Activated CD4-positive, alpha-beta T cell treated with anti-CD3 and anti-CD28 coated beads for 36 hours (primary cell): ENCODE measurements at regions of chr1 and their contacts with region 1.

Region 1: GRCh38 chr1:115098979-115099692 is 9.8 kb upstream of the TSPAN2 start:
- DNase-seq: peak; percentile 80
- ATAC-seq: peak; percentile 80
- H3K4me3 Mint-ChIP-seq: peak overlapping the region; percentile 75
- H3K27ac Mint-ChIP-seq: peak overlapping the region; percentile 69
- H3K4me1 Mint-ChIP-seq: peaks cover 39% of the 10 kb centered on the region
- H3K27me3 Mint-ChIP-seq: no peaks in the 10 kb centered on the region

Region 2: GRCh38 chr1:114745291-114745690 is 353.8 kb before region 1 on chr1:
- CTCF ChIA-PET with region 1: interaction called, 4 read pairs
- POLR2A ChIA-PET with region 1: no interaction called
- intact Hi-C with region 1: loop called in 1 of 2 experiments (anchors 10 kb)
- DNase-seq: peak; percentile 29
- ATAC-seq: peak; percentile 80
- H3K4me3 Mint-ChIP-seq: no peak overlapping the region
- H3K27ac Mint-ChIP-seq: peak overlapping the region; percentile 37
- H3K4me1 Mint-ChIP-seq: peaks cover 80% of the 10 kb centered on the region
- H3K27me3 Mint-ChIP-seq: no peaks in the 10 kb centered on the region

Region 3: GRCh38 chr1:115764541-115764940 is 665.4 kb after region 1 on chr1:
- CTCF ChIA-PET with region 1: no interaction called
- POLR2A ChIA-PET with region 1: no interaction called
- intact Hi-C with region 1: no loop called
- DNase-seq: no peak
- ATAC-seq: no peak
- H3K4me3 Mint-ChIP-seq: no peak overlapping the region
- H3K27ac Mint-ChIP-seq: no peak overlapping the region
- H3K4me1 Mint-ChIP-seq: no peaks in the 10 kb centered on the region
- H3K27me3 Mint-ChIP-seq: peaks cover 2% of the 10 kb centered on the region